ENCODE measurements at regions of chr21 and their contacts with region 1.

Region 1: GRCh38 chr21:34888569-34889319 is 160.4 kb downstream of the RUNX1 start:
- DNase-seq: peak; percentile 87 to 92 (median 90)
- H3K4me3 ChIP-seq: peak overlapping the region; percentile 73 to 96 (median 87)
- H3K4me3 Mint-ChIP-seq: peak overlapping the region; percentile 95 to 98
- H3K27ac ChIP-seq: peak overlapping the region; percentile 91 to 98
- H3K27ac Mint-ChIP-seq: peak overlapping the region; percentile 96 to 99 (median 99)
- H3K4me1 ChIP-seq: peaks cover 34 to 46% of the 10 kb centered on the region in 2 donors
- H3K4me1 Mint-ChIP-seq: peaks cover 30% of the 10 kb centered on the region
- H3K27me3 ChIP-seq: no peaks in the 10 kb centered on the region
- H3K27me3 Mint-ChIP-seq: no peaks in the 10 kb centered on the region
- CTCF ChIP-seq: no peak

Region 2: DNA sequence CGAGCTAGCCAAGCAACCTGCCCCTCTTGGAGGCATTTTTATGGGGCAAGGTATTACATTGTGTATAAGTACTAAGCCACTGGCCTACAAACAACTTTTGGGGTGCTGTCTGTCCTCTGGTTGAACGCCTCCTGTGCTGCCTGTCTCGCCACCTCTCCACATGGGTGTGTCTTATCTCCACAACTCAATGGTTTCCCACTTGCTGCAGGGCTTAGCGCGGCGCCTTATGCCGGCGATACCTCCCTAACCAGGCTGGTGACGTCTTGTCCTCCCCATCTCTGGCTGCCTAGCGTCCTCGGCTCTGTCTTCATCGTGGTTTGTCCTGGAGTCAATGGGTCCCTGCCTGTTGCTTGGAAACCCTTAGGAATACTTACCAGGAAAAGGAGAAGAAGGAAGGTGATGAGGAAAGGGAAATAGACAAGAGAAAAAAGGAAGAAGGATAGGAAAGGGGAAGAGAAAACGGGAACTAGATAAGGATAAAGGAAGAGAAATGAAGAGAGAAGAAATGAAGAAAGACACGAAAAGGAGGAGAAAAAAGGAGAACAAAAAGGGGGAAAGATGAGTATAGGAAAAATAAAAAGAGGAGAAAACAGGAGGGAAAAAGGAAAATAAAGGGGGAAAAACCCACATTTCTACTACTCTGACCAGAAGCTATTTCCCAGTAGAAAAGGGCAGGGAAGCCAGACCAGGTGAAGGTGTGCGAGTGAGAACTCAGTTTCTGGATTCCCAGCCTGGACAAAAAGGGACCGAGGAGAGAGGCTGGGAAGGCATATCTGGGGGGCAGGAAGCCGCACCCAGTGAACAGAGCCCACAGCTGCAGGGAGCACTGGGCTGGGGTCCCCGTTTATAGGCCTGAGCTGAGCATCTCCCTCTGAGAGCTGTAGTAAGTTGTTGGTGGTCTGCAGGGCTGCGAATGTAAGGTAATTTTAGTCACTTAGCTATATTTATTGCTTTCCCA is 133.8 kb before region 1 on chr21:
- intact Hi-C with region 1: loop called in 1 of 2 experiments (anchors 5 kb)
- DNase-seq: no peak
- H3K4me3 ChIP-seq: no peak overlapping the region
- H3K4me3 Mint-ChIP-seq: no peak overlapping the region
- H3K27ac ChIP-seq: no peak overlapping the region
- H3K27ac Mint-ChIP-seq: peak overlapping the region in 2 of 7 donors; percentile 1 to 17
- H3K4me1 ChIP-seq: no peaks in the 10 kb centered on the region
- H3K4me1 Mint-ChIP-seq: peaks cover 5% of the 10 kb centered on the region
- H3K27me3 ChIP-seq: no peaks in the 10 kb centered on the region
- H3K27me3 Mint-ChIP-seq: peaks cover 6 to 13% (median 7%) of the 10 kb centered on the region in 3 donors
- CTCF ChIP-seq: no peak

Region 3: DNA sequence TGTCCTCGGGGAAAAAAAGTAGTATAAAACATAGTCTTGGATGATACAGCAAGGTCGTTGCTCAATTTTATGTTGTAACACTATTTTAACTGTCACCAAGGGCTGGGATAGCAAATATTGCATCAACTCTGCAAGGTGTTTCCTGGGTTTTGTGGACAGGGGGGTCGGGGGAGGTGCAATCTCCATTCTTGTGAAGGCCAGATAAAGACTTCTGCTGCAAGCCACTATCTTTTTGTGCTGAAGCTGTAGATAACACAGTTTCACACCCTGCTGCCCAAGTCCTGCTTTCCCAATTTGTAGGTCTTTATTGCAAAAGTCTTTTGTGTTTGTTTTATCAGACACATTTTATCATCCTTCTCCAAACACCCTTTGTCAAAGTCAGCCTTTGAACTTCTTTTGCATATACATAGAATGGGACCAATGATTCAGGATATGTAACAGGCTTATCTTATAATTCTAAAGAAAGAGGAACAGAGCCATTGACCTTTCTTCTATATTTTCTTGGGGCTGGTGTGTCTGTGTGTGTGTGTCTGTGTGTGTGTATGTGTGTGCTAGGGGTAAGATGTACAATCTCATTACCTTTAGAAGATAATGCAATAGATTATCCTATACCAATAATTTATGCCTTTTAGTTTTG is 19.8 kb after region 1 on chr21:
- intact Hi-C with region 1: loop called in 1 of 2 experiments (anchors 2 kb)
- DNase-seq: peak; percentile 72 to 92 (median 86)
- H3K4me3 ChIP-seq: peak overlapping the region in 2 of 3 experiments; percentile 51 to 72
- H3K4me3 Mint-ChIP-seq: peak overlapping the region; percentile 60 to 86
- H3K27ac ChIP-seq: peak overlapping the region; percentile 70 to 88
- H3K27ac Mint-ChIP-seq: peak overlapping the region; percentile 90 to 97 (median 92)
- H3K4me1 ChIP-seq: peaks cover 76 to 93% of the 10 kb centered on the region in 2 donors
- H3K4me1 Mint-ChIP-seq: peaks cover 92% of the 10 kb centered on the region
- H3K27me3 ChIP-seq: no peaks in the 10 kb centered on the region
- H3K27me3 Mint-ChIP-seq: no peaks in the 10 kb centered on the region
- CTCF ChIP-seq: no peak

Region 4: DNA sequence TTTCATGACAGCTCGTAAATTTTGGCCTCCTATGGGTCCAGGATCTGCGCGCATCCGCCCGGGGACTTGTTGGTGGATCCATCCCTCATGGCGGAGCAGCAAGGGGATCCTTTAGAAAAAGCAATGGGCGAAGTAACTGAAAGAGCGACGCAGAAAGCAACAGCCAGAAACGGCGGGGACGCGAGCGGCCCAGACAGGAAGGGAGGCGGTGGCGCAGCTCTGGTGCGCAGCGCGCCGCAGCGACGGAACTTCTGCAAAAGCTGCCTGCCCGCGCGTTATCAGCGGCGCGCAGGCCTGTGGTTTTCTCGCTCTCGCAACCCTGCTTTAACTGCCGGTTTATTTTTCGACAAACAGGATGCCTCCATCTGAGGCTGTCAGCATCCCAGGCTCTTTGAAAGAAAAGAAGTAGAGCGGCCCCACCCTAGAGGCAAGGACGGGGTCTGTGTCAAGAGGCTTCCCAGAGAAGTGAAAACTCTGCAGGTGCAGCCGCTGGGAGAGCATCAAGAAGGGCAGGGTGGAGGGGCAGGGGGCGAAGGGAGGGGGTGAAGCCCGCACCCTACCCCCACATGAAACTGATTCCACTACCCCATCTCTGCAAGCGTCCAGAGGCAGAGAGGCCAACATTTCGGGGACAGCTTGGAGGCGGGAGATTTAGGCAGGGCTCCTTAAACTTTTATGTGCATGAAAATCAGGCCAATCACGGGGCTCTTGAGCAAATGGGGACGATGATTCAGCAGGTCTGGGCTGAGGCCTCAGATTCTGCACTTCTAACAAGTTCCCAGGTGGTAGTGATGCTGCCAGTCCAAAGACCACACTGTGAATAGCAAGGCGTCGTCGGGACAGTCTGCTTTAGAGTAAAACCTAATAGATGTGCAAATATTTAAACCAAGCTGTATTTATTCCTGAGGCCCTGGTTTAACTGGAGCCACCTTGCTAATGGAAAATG is 138.1 kb after region 1 on chr21:
- intact Hi-C with region 1: loop called (anchors 5 kb)
- DNase-seq: peak; percentile 79 to 89 (median 86)
- H3K4me3 ChIP-seq: peak overlapping the region; percentile 34 to 68 (median 45)
- H3K4me3 Mint-ChIP-seq: peak overlapping the region; percentile 82 to 97
- H3K27ac ChIP-seq: peak overlapping the region; percentile 81 to 93
- H3K27ac Mint-ChIP-seq: peak overlapping the region; percentile 97 to 99 (median 98)
- H3K4me1 ChIP-seq: peaks cover 47 to 53% of the 10 kb centered on the region in 2 donors
- H3K4me1 Mint-ChIP-seq: peaks cover 62% of the 10 kb centered on the region
- H3K27me3 ChIP-seq: no peaks in the 10 kb centered on the region
- H3K27me3 Mint-ChIP-seq: peaks cover 0 to 2% (median 0%) of the 10 kb centered on the region in 3 donors
- CTCF ChIP-seq: no peak

Region 5: GRCh38 chr21:35508139-35508888 is 619.6 kb after region 1 on chr21:
- intact Hi-C with region 1: loop called in 1 of 2 experiments (anchors 5 kb)
- DNase-seq: peak; percentile 82 to 92 (median 83)
- H3K4me3 ChIP-seq: peak overlapping the region in 1 of 3 experiments; percentile 36
- H3K4me3 Mint-ChIP-seq: peak overlapping the region; percentile 31 to 72
- H3K27ac ChIP-seq: peak overlapping the region; percentile 60 to 94
- H3K27ac Mint-ChIP-seq: peak overlapping the region; percentile 94 to 99 (median 96)
- H3K4me1 ChIP-seq: peaks cover 28 to 48% of the 10 kb centered on the region in 2 donors
- H3K4me1 Mint-ChIP-seq: peaks cover 41% of the 10 kb centered on the region
- H3K27me3 ChIP-seq: no peaks in the 10 kb centered on the region
- H3K27me3 Mint-ChIP-seq: peaks cover 0 to 2% (median 0%) of the 10 kb centered on the region in 3 donors
- CTCF ChIP-seq: peak; percentile 63